RWPE1 (cell line): ENCODE measurements at regions of chr7 and their contacts with region 1.

Region 1: GRCh38 chr7:55526770-55527169 is 45.5 kb downstream of the VOPP1 start:
- DNase-seq: no peak
- H3K27ac ChIP-seq: no peak overlapping the region
- CTCF ChIP-seq: no peak

Region 2: GRCh38 chr7:54823776-54824175 is 703.0 kb before region 1 on chr7:
- CTCF ChIA-PET with region 1: no interaction called
- POLR2A ChIA-PET with region 1: no interaction called
- DNase-seq: no peak
- H3K27ac ChIP-seq: no peak overlapping the region
- CTCF ChIP-seq: no peak

Region 3: GRCh38 chr7:55314962-55315685 is 211.6 kb before region 1 on chr7:
- CTCF ChIA-PET with region 1: no interaction called
- POLR2A ChIA-PET with region 1: no interaction called
- DNase-seq: no peak
- H3K27ac ChIP-seq: no peak overlapping the region
- CTCF ChIP-seq: no peak

Region 4: DNA sequence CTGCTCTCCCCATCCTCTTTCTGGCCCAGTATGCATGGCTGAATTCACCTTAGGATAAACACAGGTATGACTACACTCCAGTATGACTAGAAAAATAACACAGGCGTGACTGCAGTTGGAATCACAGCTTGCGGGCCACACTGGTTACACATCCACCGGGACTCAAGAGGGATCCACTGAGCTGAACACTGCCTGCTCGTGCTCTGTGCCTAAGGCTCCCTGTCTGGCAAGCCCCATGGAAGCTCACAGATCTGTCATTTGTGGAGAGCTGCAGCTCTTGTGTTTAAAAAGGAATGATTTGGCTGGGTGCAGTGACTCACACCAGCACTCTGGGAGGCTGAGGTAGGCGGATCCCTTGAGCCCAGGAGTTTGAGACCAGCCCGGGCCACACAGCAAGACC is 18.7 kb after region 1 on chr7:
- CTCF ChIA-PET with region 1: no interaction called
- POLR2A ChIA-PET with region 1: no interaction called
- DNase-seq: peak; percentile 44
- H3K27ac ChIP-seq: peak overlapping the region; percentile 42
- CTCF ChIP-seq: no peak

Region 5: GRCh38 chr7:55657654-55658053 is 130.9 kb after region 1 on chr7:
- CTCF ChIA-PET with region 1: no interaction called
- POLR2A ChIA-PET with region 1: interaction called, 15 read pairs
- DNase-seq: no peak
- H3K27ac ChIP-seq: no peak overlapping the region
- CTCF ChIP-seq: no peak

Region 6: DNA sequence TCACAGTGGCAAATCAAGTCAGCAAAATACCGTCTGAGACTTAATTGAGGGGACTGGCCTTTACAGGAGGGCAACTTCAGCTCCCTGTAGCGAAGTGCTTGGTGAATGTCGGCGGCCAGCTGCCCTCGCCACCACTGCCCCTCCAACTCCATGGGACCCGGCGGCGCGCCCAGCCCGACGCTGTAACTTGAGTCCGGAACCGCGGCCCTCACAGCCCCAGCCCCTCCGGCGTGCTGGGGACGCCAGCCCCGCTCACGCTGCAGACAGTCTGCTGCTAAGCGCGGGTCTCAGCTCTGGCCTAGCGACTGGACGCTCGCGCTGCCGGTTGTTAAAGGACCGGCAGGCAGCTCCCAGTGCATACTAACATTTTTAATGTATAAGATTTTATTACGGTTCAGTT is 702.9 kb after region 1 on chr7:
- CTCF ChIA-PET with region 1: no interaction called
- POLR2A ChIA-PET with region 1: no interaction called
- DNase-seq: no peak
- H3K27ac ChIP-seq: no peak overlapping the region
- CTCF ChIP-seq: no peak